Heart left ventricle (tissue), 16 donors: ENCODE measurements at regions of chr3 and their contacts with region 1.

Region 1: GRCh38 chr3:24650839-24651238 is 156.2 kb upstream of the THRB start:
- DNase-seq: no peak
- ATAC-seq: no peak
- H3K4me3 ChIP-seq: no peak overlapping the region
- H3K27ac ChIP-seq: no peak overlapping the region
- H3K4me1 ChIP-seq: no peaks in the 10 kb centered on the region
- H3K27me3 ChIP-seq: no peaks in the 10 kb centered on the region
- CTCF ChIP-seq: no peak
- POLR2A ChIP-seq: no peak

Region 2: GRCh38 chr3:24451461-24452099 is 199.3 kb before region 1 on chr3:
- intact Hi-C with region 1: no loop called
- DNase-seq: no peak
- ATAC-seq: peak in 3 of 4 donors; percentile 12 to 38 (median 28)
- H3K4me3 ChIP-seq: no peak overlapping the region
- H3K27ac ChIP-seq: no peak overlapping the region
- H3K4me1 ChIP-seq: peaks cover 0 to 29% (median 8%) of the 10 kb centered on the region in 12 donors
- H3K27me3 ChIP-seq: no peaks in the 10 kb centered on the region
- CTCF ChIP-seq: no peak
- POLR2A ChIP-seq: no peak

Region 3: DNA sequence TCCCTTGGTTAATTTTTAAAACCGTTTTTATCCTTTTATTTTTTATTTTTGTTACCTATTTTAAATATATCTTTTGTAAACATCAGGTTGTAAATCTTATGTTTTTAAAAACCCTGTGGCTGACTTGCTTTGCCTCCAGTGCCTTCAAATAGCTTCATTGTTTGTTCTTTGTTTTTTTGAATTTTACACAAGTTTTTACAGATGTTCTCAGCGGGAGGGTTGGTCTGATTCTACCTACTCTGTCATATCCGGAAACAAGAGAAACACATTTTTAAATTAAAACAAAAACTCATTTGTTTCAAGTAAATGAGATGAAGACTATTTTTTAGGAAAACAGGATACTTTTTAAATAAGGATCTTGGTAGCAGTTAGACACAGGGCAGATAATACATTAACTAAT is 27.2 kb before region 1 on chr3:
- intact Hi-C with region 1: loop called in 1 of 10 experiments (anchors 1 kb)
- DNase-seq: no peak
- ATAC-seq: no peak
- H3K4me3 ChIP-seq: no peak overlapping the region
- H3K27ac ChIP-seq: no peak overlapping the region
- H3K4me1 ChIP-seq: no peaks in the 10 kb centered on the region
- H3K27me3 ChIP-seq: no peaks in the 10 kb centered on the region
- CTCF ChIP-seq: no peak
- POLR2A ChIP-seq: no peak